Heart left ventricle (tissue), 16 donors: ENCODE measurements at regions of chr2 and their contacts with region 1.

Region 1: GRCh38 chr2:181457121-181457740 is at the start of gene ITGA4:
- DNase-seq: peak; percentile 63 to 92 (median 74)
- ATAC-seq: peak; percentile 66 to 98 (median 96)
- H3K4me3 ChIP-seq: peak within 1 kb of the TSS; percentile 22 to 66 (median 57)
- H3K27ac ChIP-seq: peak within 1 kb of the TSS in 10 of 12 donors; percentile 26 to 92 (median 48)
- H3K4me1 ChIP-seq: peaks cover 0 to 36% (median 6%) of the 10 kb centered on the region in 12 donors
- H3K27me3 ChIP-seq: peaks cover 3 to 35% (median 21%) of the 10 kb centered on the region in 9 donors
- CTCF ChIP-seq: peak; percentile 35 to 75 (median 58)
- POLR2A ChIP-seq: no peak
- total RNA-seq, gene ITGA4: 0.69 to 16.5 (median 1.8) TPM

Region 2: DNA sequence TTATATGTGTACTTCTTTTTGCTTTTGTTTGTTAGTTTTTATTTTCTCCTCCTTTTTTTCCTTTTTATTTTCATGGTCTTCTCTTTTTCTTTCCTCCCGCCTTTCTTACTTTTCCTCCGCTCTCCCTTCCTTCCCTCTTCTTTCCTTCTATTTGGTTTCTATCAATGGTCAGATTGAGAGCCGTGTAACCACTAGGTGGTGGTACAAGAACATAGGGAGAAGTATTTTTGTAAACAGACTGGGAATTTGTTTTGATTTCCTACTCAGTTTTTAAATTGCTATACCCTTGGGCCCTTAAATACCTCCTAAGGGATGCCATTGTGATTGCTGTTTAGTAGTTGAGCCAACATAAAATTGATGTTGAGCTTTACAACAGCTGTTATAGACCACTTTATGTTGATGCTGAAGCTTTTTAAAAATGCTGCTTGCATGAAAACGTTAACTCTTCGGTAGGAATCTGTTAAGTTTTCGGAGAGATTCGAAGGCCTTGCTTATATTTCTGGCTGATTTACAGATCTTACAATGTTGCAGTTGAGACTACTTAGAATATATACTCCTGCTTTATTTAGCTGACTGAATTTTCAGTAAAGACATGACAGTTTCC is 352.6 kb before region 1 on chr2:
- intact Hi-C with region 1: loop called in 7 of 10 experiments (anchors 2 to 10 kb)
- DNase-seq: no peak
- ATAC-seq: peak in 1 of 4 donors; percentile 46
- H3K4me3 ChIP-seq: no peak overlapping the region
- H3K27ac ChIP-seq: no peak overlapping the region
- H3K4me1 ChIP-seq: peaks cover 0 to 16% (median 0%) of the 10 kb centered on the region in 12 donors
- H3K27me3 ChIP-seq: no peaks in the 10 kb centered on the region
- CTCF ChIP-seq: peak; percentile 44 to 73 (median 61)
- POLR2A ChIP-seq: no peak

Region 3: GRCh38 chr2:181305301-181306123 is 151.7 kb before region 1 on chr2:
- intact Hi-C with region 1: loop called in 3 of 10 experiments (anchors 5 to 10 kb)
- DNase-seq: peak in 4 of 5 donors; percentile 26 to 62 (median 35)
- ATAC-seq: peak; percentile 94 to 98 (median 98)
- H3K4me3 ChIP-seq: no peak overlapping the region
- H3K27ac ChIP-seq: peak overlapping the region in 8 of 12 donors; percentile 8 to 88 (median 44)
- H3K4me1 ChIP-seq: peaks cover 0 to 65% (median 7%) of the 10 kb centered on the region in 12 donors
- H3K27me3 ChIP-seq: no peaks in the 10 kb centered on the region
- CTCF ChIP-seq: no peak
- POLR2A ChIP-seq: no peak

Region 4: DNA sequence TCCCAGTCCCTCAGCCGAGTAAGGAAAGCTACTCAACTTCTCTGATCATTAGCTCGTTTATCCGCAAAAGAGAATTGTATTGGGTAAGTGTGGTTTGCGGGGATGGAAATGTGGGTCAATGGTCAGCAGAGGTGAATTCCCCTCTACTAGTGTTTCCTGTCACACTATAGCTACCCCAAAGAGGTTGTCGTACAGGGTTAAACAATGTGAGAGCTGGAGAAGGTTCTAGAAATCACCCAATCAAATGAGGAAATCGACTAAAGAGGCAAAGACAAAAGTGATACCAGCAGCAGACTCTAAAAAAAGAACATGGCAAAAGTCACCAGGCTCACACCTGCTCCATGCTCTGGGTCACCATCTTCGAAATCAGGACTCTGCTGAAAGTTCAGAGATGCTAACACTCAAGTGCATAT is 144.7 kb before region 1 on chr2:
- intact Hi-C with region 1: loop called in 2 of 10 experiments (anchors 10 kb)
- DNase-seq: no peak
- ATAC-seq: no peak
- H3K4me3 ChIP-seq: no peak overlapping the region
- H3K27ac ChIP-seq: peak overlapping the region in 1 of 12 donors; percentile 78
- H3K4me1 ChIP-seq: peaks cover 0 to 59% (median 0%) of the 10 kb centered on the region in 12 donors
- H3K27me3 ChIP-seq: no peaks in the 10 kb centered on the region
- CTCF ChIP-seq: no peak
- POLR2A ChIP-seq: no peak